AG04450 (cell line): ENCODE measurements at regions of chr14 and their contacts with region 1.

Region 1: GRCh38 chr14:49892636-49893308 is at the start of gene ARF6:
- DNase-seq: peak; percentile 88
- H3K4me3 ChIP-seq: peak within 1 kb of the TSS; percentile 95
- H3K27ac ChIP-seq: peak within 1 kb of the TSS; percentile 98
- H3K27me3 ChIP-seq: no peaks in the 10 kb centered on the region
- CTCF ChIP-seq: peak; percentile 14
- polyA plus RNA-seq, gene ARF6: 27.1 and 28.0 TPM in 2 replicates

Region 2: GRCh38 chr14:49879683-49880204 is 13.0 kb before region 1 on chr14:
- CTCF ChIA-PET with region 1: interaction called, 4 read pairs
- POLR2A ChIA-PET with region 1: interaction called, 10 read pairs
- DNase-seq: no peak
- H3K4me3 ChIP-seq: no peak overlapping the region
- H3K27ac ChIP-seq: no peak overlapping the region
- H3K27me3 ChIP-seq: no peaks in the 10 kb centered on the region
- CTCF ChIP-seq: peak; percentile 65

Region 3: DNA sequence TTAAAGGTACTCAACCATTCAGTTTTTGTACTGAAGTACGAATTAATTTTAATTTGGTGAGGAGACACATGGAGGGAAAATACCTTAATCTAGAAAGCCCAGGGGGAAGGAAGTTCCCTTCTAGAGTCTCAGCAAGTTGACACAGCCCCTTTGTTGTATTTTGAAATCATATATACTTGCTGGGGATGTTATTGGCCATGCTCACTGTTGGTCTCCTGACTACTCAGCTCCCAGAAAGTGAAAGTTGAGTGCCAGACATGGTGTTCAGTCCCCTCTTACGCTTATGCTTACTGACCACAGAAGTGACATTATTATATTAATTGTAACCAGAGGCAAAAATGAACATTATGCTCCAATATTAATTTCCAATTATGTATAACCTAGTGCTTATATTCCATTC is 28.2 kb after region 1 on chr14:
- CTCF ChIA-PET with region 1: no interaction called
- POLR2A ChIA-PET with region 1: no interaction called
- DNase-seq: no peak
- H3K4me3 ChIP-seq: no peak overlapping the region
- H3K27ac ChIP-seq: no peak overlapping the region
- H3K27me3 ChIP-seq: no peaks in the 10 kb centered on the region
- CTCF ChIP-seq: no peak

Region 4: DNA sequence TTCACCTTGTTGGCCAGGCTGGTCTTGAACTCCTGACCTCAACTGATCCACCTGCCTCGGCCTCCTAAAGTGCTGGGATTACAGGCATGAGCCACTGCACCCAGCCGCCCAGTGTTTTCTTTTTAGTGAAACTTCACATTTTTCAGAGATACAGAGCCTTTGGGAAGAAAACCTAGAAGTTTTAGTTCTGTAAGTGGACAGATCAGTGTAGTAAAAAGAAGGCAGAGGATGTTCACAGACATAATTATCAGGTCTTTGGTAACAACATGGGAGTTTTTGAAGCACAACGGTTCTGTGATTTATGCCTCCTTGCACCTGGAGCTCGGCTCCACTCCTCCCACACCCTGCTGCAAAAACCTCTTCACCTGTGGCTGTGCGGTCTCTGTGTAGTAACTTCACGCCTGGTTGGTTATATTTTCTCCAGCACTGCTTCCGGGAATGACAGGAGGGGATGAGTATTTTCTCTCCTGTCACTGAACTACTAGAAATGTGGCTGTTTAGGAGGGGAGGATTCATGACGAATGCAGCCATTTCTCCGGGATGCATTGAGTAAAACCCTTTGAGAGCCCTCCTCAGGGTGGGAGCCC is 67.1 kb after region 1 on chr14:
- CTCF ChIA-PET with region 1: no interaction called
- POLR2A ChIA-PET with region 1: no interaction called
- DNase-seq: no peak
- H3K4me3 ChIP-seq: no peak overlapping the region
- H3K27ac ChIP-seq: no peak overlapping the region
- H3K27me3 ChIP-seq: no peaks in the 10 kb centered on the region
- CTCF ChIP-seq: no peak

Region 5: GRCh38 chr14:50237427-50237826 is 344.7 kb after region 1 on chr14:
- CTCF ChIA-PET with region 1: no interaction called
- POLR2A ChIA-PET with region 1: interaction called, 11 read pairs
- DNase-seq: no peak
- H3K4me3 ChIP-seq: no peak overlapping the region
- H3K27ac ChIP-seq: no peak overlapping the region
- H3K27me3 ChIP-seq: no peaks in the 10 kb centered on the region
- CTCF ChIP-seq: no peak